ENCODE measurements at regions of chr21 and their contacts with region 1.

Region 1: GRCh38 chr21:43659136-43660000 is at the starts of genes HSF2BP and RRP1B:
- DNase-seq: peak; percentile 89
- ATAC-seq: peak; percentile 89
- H3K4me3 Mint-ChIP-seq: peak within 1 kb of the TSS; percentile 94
- H3K27ac Mint-ChIP-seq: peak within 1 kb of the TSS; percentile 93
- H3K4me1 Mint-ChIP-seq: peaks cover 43% of the 10 kb centered on the region
- H3K27me3 Mint-ChIP-seq: no peaks in the 10 kb centered on the region
- total RNA-seq, gene HSF2BP: 1.5 to 1.6 TPM
- total RNA-seq, gene RRP1B: 64.0 to 66.7 TPM

Region 2: GRCh38 chr21:42878993-42879787 is 780.2 kb before region 1 on chr21 and contains the start of gene WDR4:
- CTCF ChIA-PET with region 1: no interaction called
- POLR2A ChIA-PET with region 1: no interaction called
- intact Hi-C with region 1: loop called in 1 of 2 experiments (anchors 1 kb)
- DNase-seq: peak; percentile 99
- ATAC-seq: peak; percentile 93
- H3K4me3 Mint-ChIP-seq: peak within 1 kb of the TSS; percentile 92
- H3K27ac Mint-ChIP-seq: peak within 1 kb of the TSS; percentile 99
- H3K4me1 Mint-ChIP-seq: peaks cover 17% of the 10 kb centered on the region
- H3K27me3 Mint-ChIP-seq: no peaks in the 10 kb centered on the region
- total RNA-seq, gene WDR4: 34.0 to 46.5 TPM

Region 3: GRCh38 chr21:42973991-42974831 is 685.2 kb before region 1 on chr21 and contains the start of gene PKNOX1:
- CTCF ChIA-PET with region 1: no interaction called
- POLR2A ChIA-PET with region 1: no interaction called
- intact Hi-C with region 1: loop called (anchors 1 to 10 kb)
- DNase-seq: peak; percentile 100
- ATAC-seq: peak; percentile 89
- H3K4me3 Mint-ChIP-seq: peak within 1 kb of the TSS; percentile 85
- H3K27ac Mint-ChIP-seq: peak within 1 kb of the TSS; percentile 94
- H3K4me1 Mint-ChIP-seq: peaks cover 30% of the 10 kb centered on the region
- H3K27me3 Mint-ChIP-seq: no peaks in the 10 kb centered on the region
- total RNA-seq, gene PKNOX1: 13.4 to 14.8 TPM

Region 4: GRCh38 chr21:43646550-43647260 is 12.7 kb before region 1 on chr21:
- CTCF ChIA-PET with region 1: interaction called, 15 read pairs
- POLR2A ChIA-PET with region 1: no interaction called
- intact Hi-C with region 1: no loop called
- DNase-seq: peak; percentile 92
- ATAC-seq: peak; percentile 98
- H3K4me3 Mint-ChIP-seq: peak overlapping the region; percentile 5
- H3K27ac Mint-ChIP-seq: no peak overlapping the region
- H3K4me1 Mint-ChIP-seq: peaks cover 20% of the 10 kb centered on the region
- H3K27me3 Mint-ChIP-seq: peaks cover 2% of the 10 kb centered on the region

Region 5: DNA sequence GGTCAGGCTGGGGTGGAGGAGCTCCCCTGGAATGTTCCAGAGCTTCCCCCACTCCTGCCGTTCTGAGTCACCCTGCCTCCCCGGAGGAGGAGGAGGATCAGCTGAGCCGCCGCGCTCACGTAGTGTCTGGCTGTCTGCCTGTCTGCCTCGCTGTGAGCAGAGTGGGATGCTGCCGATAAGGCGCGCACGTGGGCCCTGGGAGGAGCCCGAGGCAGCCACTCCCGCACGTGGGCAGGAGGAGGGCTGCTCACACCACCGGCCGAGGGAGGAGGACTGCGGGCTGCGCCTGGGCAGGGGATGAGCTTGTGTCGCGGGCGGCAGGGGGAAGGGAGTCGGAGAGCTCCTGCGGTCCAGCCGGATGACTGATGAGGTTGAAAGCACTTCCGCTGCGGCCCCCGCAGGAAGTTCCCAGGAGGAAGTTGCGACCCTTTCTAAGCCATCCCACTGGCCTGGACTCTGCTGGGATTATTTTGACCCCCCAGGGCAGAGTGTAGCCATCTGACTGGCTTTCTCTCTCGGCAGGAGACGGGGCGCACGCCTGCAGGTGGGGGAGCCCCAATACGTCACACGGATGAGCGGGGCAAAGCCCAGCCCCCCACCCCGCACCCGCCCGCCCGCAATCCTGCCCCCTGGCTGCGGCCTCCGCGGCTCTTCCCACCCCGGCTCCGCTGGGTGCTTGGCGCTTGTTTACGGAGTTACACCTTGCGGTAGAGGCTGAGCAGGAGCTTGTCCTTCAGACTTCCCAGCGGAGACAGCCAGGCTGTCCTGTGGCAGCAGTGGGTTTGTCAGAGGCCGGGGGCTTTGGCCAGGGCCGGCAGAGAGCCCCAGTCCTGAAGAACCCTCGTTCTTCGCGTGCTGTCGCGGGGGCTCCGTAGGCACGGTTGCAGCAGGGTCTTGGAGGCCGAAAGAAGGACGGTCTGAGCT is 69.4 kb after region 1 on chr21:
- CTCF ChIA-PET with region 1: interaction called, 3 read pairs
- POLR2A ChIA-PET with region 1: interaction called, 4 read pairs
- intact Hi-C with region 1: loop called (anchors 2 to 5 kb)
- DNase-seq: peak; percentile 90
- ATAC-seq: peak; percentile 87
- H3K4me3 Mint-ChIP-seq: peak overlapping the region; percentile 78
- H3K27ac Mint-ChIP-seq: peak overlapping the region; percentile 92
- H3K4me1 Mint-ChIP-seq: peaks cover 71% of the 10 kb centered on the region
- H3K27me3 Mint-ChIP-seq: no peaks in the 10 kb centered on the region

Region 6: DNA sequence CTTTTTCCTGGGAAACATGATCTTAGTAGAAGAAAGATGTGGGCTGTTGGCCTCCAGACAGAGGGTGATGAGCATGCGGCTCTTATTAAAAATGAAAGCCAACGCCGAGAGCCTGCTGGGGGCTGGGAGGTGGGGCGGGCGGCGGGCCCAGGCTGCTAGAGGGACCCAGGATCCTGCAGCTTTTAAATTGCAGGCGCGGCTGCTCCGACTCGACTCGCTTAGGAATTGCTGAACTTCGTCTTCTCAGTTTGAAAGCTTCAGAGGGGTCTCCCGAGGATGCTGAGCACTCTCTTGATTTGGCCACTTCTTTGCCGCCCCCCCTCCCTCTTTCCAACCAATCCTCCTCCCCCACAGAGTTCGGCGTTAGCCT is 206.9 kb after region 1 on chr21:
- CTCF ChIA-PET with region 1: no interaction called
- POLR2A ChIA-PET with region 1: no interaction called
- intact Hi-C with region 1: loop called in 1 of 2 experiments (anchors 10 kb)
- DNase-seq: peak; percentile 81
- ATAC-seq: peak; percentile 56
- H3K4me3 Mint-ChIP-seq: peak overlapping the region; percentile 79
- H3K27ac Mint-ChIP-seq: peak overlapping the region; percentile 95
- H3K4me1 Mint-ChIP-seq: peaks cover 44% of the 10 kb centered on the region
- H3K27me3 Mint-ChIP-seq: no peaks in the 10 kb centered on the region

Measured in activated CD4-positive, alpha-beta T cell treated with anti-CD3 and anti-CD28 coated beads for 36 hours (primary cell).